ENCODE measurements at regions of chr16 and their contacts with region 1.

Region 1: DNA sequence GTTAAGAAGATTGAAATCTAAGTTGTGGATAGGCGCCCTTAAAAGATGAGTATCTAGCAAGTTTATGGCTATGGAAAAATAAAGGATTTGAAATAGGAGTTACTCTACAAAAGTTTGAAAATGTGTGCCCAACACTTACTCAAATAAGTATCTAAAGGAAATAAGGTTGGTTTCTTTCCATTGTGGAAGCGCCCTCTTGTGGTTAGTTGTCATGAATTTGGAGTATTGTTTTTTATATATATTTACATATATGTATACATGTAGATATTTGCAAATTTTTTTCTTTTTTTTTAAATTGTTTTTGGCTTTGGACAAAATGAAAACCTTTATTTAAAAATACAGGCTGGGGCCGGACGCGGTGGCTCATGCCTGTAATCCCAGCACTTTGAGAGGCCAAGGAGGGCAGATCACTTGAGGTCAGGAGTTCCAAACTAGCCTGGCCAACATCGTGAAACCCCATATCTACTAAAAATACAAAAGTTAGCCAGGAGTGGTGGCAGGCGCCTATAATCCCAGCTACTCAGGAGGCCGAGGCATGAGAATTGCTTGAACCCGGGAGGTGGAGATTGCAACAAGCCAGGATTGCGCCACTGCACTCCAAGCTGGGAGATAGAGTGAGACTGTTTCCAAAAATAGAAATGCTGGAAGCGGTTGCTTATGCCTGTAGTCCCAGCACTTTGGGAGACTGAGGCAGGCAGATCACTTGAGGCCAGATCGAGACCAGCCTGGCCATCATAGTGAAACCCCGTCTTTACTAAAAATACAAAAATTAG is 24.0 kb upstream of the VPS4A start:
- DNase-seq: peak; percentile 31
- ATAC-seq: peak; percentile 44
- H3K4me3 ChIP-seq: no peak overlapping the region
- H3K27ac ChIP-seq: no peak overlapping the region
- H3K4me1 ChIP-seq: no peaks in the 10 kb centered on the region
- H3K27me3 ChIP-seq: no peaks in the 10 kb centered on the region
- CTCF ChIP-seq: peak; percentile 40 to 77 (median 51); a peak in 5 of 6 replicates
- POLR2A ChIP-seq: no peak
- RAD21 ChIP-seq: peak; percentile 66

Region 2: GRCh38 chr16:69150146-69150865 is 136.8 kb before region 1 on chr16:
- CTCF ChIA-PET with region 1: interaction called, 30 read pairs
- POLR2A ChIA-PET with region 1: no interaction called
- RAD21 ChIA-PET with region 1: no interaction called
- intact Hi-C with region 1: loop called (anchors 1 kb)
- DNase-seq: peak; percentile 55
- ATAC-seq: peak; percentile 94
- H3K4me3 ChIP-seq: no peak overlapping the region
- H3K27ac ChIP-seq: no peak overlapping the region
- H3K4me1 ChIP-seq: no peaks in the 10 kb centered on the region
- H3K27me3 ChIP-seq: no peaks in the 10 kb centered on the region
- CTCF ChIP-seq: peak; percentile 63 to 87 (median 71); a peak in 5 of 6 replicates
- POLR2A ChIP-seq: no peak
- RAD21 ChIP-seq: peak; percentile 87